ENCODE measurements at regions of chr22 and their contacts with region 1.

Region 1: GRCh38 chr22:22182218-22182989 is 62.2 kb upstream of the VPREB1 start:
- DNase-seq: no peak
- H3K4me3 ChIP-seq: no peak overlapping the region
- H3K27ac ChIP-seq: no peak overlapping the region
- H3K4me1 ChIP-seq: no peaks in the 10 kb centered on the region
- H3K27me3 ChIP-seq: peaks cover 3 to 43% (median 14%) of the 10 kb centered on the region in 5 experiments

Region 2: GRCh38 chr22:22195265-22196017 is 13.0 kb after region 1 on chr22:
- CTCF ChIA-PET with region 1: interaction called, 35 read pairs
- POLR2A ChIA-PET with region 1: no interaction called
- DNase-seq: peak; percentile 84 to 85 (median 84)
- H3K4me3 ChIP-seq: no peak overlapping the region
- H3K27ac ChIP-seq: no peak overlapping the region
- H3K4me1 ChIP-seq: no peaks in the 10 kb centered on the region
- H3K27me3 ChIP-seq: peaks cover 0 to 36% (median 15%) of the 10 kb centered on the region in 5 experiments

Region 3: GRCh38 chr22:22201185-22201929 is 19.0 kb after region 1 on chr22:
- CTCF ChIA-PET with region 1: interaction called, 35 read pairs
- POLR2A ChIA-PET with region 1: no interaction called
- DNase-seq: peak; percentile 47 to 86 (median 78)
- H3K4me3 ChIP-seq: no peak overlapping the region
- H3K27ac ChIP-seq: no peak overlapping the region
- H3K4me1 ChIP-seq: no peaks in the 10 kb centered on the region
- H3K27me3 ChIP-seq: peaks cover 0 to 85% (median 24%) of the 10 kb centered on the region in 5 experiments

Measured in common myeloid progenitor, CD34-positive (primary cell).